ENCODE measurements at regions of chr16 and their contacts with region 1.

Region 1: GRCh38 chr16:11356573-11357331 is 11.5 kb downstream of the RMI2 start:
- DNase-seq: peak; percentile 70
- ATAC-seq: no peak
- H3K4me3 Mint-ChIP-seq: no peak overlapping the region
- H3K27ac Mint-ChIP-seq: no peak overlapping the region
- H3K4me1 Mint-ChIP-seq: peaks cover 62% of the 10 kb centered on the region
- H3K27me3 Mint-ChIP-seq: peaks cover 13% of the 10 kb centered on the region
- CTCF ChIP-seq: peak; percentile 65

Region 2: GRCh38 chr16:10964039-10964890 is 392.5 kb before region 1 on chr16:
- CTCF ChIA-PET with region 1: interaction called, 13 read pairs
- POLR2A ChIA-PET with region 1: interaction called, 5 read pairs
- intact Hi-C with region 1: no loop called
- DNase-seq: peak; percentile 85
- ATAC-seq: peak; percentile 47
- H3K4me3 Mint-ChIP-seq: no peak overlapping the region
- H3K27ac Mint-ChIP-seq: peak overlapping the region; percentile 92
- H3K4me1 Mint-ChIP-seq: peaks cover 42% of the 10 kb centered on the region
- H3K27me3 Mint-ChIP-seq: no peaks in the 10 kb centered on the region
- CTCF ChIP-seq: peak; percentile 99

Region 3: DNA sequence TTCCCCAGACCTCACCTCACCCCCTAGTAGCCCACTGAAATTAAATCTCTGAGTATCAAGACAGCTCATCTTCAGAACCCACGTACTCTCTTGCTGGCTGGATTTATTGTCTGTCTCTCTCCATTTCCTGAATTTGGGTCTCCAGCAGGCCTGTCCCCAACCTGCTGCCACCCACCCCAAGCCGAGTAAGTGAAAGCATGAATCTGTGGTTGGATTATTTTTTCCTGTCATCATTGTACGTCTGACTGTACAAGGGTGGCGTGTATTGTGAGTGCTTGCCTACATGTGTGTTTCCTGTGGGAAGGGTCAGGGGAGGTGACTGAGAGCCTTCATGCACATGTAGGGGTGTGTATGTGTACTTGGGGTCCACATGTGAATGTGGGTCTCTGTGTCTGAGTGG is 93.0 kb before region 1 on chr16:
- CTCF ChIA-PET with region 1: interaction called, 88 read pairs
- POLR2A ChIA-PET with region 1: interaction called, 11 read pairs
- intact Hi-C with region 1: no loop called
- DNase-seq: peak; percentile 83
- ATAC-seq: peak; percentile 88
- H3K4me3 Mint-ChIP-seq: peak overlapping the region; percentile 2
- H3K27ac Mint-ChIP-seq: peak overlapping the region; percentile 79
- H3K4me1 Mint-ChIP-seq: peaks cover 36% of the 10 kb centered on the region
- H3K27me3 Mint-ChIP-seq: no peaks in the 10 kb centered on the region
- CTCF ChIP-seq: no peak

Region 4: DNA sequence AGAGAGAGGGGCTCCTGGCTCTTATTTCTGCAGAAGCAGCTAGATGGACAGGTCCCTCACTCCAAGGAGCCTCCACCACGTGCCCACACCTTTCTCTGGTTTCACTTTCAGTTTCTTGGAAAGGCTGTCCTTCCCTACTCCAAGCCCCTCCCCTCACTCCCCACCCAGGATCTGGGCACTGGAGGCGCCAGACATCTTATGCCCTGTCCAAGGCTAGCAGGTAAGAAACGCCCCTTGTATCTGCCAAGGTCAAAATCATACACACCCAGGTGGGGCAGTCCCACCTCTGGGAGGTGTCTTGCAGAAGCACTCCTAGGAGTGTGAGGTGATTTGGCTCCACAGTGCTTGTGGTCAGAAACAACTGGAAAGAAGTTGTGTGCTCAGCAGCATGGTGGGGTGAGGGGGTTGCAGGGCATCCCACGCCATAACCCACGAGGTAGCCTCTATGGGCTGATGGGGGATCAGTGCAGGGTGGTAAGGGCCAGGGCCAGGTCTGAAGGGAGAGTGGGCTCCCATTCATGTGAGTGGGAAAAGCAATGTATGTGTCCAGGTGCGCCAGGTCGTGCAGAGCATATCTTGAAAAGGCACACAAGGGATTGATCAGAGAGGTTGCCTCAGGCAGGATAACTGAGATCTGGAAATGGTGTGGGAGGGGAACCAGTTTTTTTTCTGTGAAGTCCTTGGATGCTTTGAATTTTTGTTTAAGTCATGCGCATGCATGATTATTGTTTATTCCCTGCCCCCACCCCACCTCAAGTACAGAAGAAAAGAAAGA is 43.8 kb before region 1 on chr16:
- CTCF ChIA-PET with region 1: interaction called, 4 read pairs
- POLR2A ChIA-PET with region 1: interaction called, 4 read pairs
- intact Hi-C with region 1: loop called (anchors 5 kb)
- DNase-seq: peak; percentile 31
- ATAC-seq: peak; percentile 22
- H3K4me3 Mint-ChIP-seq: no peak overlapping the region
- H3K27ac Mint-ChIP-seq: no peak overlapping the region
- H3K4me1 Mint-ChIP-seq: peaks cover 44% of the 10 kb centered on the region
- H3K27me3 Mint-ChIP-seq: no peaks in the 10 kb centered on the region
- CTCF ChIP-seq: no peak

Region 5: DNA sequence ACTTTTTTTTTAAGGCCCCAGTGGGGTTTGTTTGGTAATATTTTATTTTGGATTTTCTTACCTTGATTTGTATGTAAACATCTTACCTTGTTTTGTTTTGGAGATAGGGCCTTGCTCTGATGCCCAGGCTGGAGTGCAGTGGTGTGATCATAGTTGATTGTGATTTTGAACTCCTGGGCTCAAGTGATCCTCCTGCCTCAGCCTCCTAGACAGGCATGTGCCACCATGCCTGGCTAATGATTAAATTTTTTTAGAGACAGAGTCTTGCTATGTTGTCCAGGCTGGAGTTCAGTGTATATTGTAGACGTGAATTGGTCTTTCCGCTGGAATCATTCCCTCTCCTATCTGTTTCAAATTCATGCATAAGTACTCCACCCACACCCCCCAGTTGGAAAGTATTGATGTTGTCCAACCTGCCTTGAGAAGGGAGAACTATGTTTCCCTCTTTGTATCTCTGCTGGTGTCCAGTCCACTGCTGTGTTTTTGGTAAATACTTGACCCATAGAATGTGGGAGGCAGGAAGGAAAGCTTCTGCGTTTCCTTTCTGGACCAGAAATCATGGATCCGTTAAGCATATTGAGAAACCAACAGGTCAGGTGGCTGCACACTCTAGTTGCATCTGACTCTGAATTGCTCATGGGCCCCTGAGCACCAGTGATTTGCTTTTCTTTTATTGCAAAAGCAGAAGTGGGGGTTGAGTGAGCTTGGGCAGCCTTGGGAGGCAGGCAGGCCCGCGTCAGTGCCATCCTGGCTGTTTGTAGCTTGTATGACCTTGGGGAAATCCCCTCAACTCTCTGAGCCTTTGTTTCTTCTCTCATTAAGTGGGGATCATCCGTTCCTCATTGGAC is 13.6 kb after region 1 on chr16:
- CTCF ChIA-PET with region 1: interaction called, 16 read pairs
- POLR2A ChIA-PET with region 1: interaction called, 3 read pairs
- intact Hi-C with region 1: no loop called
- DNase-seq: no peak
- ATAC-seq: peak; percentile 24
- H3K4me3 Mint-ChIP-seq: no peak overlapping the region
- H3K27ac Mint-ChIP-seq: no peak overlapping the region
- H3K4me1 Mint-ChIP-seq: peaks cover 8% of the 10 kb centered on the region
- H3K27me3 Mint-ChIP-seq: no peaks in the 10 kb centered on the region
- CTCF ChIP-seq: no peak

Region 6: DNA sequence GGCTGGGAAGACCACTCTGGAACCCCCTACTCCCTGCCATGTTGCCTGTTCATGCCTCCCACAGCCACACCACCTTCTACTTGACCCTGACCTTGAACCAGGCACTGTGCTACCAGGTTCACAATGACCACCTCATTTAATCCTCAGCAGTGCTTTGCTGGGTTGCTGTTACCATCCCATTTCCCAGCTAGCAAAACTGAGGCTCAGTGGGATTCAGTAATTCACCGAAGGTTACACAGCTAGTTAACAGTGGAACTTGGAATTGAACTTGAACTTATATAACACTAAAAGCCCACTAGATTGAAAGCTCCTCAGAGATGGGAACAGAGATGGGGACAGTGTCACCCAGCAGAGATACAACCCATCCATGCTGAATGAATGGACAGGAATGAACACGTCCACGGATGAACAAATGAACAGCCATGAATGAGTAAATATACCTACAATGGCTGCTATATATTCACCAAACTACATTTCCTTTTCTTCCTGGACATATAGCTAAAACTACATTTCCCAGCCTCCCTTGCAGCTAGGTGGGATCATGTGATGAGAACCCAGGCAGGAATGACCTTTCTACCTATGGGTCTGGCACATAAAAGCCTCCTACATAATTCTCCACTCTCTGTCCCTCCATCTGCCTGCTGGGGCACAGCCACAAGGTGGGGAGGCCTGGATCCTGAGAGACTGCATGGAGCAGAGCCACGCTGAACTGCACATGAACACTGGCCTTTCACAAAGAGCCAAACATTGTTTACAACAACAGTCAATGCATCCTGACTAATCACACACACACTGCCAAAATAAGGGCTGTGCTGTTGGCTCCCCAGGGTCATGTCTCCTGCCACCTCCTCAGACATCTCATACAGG is 83.3 kb after region 1 on chr16:
- CTCF ChIA-PET with region 1: no interaction called
- POLR2A ChIA-PET with region 1: no interaction called
- intact Hi-C with region 1: no loop called
- DNase-seq: no peak
- ATAC-seq: no peak
- H3K4me3 Mint-ChIP-seq: no peak overlapping the region
- H3K27ac Mint-ChIP-seq: no peak overlapping the region
- H3K4me1 Mint-ChIP-seq: no peaks in the 10 kb centered on the region
- H3K27me3 Mint-ChIP-seq: no peaks in the 10 kb centered on the region
- CTCF ChIP-seq: no peak

Measured in activated CD8-positive, alpha-beta T cell treated with anti-CD3 and anti-CD28 coated beads for 36 hours (primary cell).